ENCODE measurements at regions of chr17 and their contacts with region 1.

Region 1: GRCh38 chr17:20149251-20149650 is 140.1 kb downstream of the SPECC1 start:
- DNase-seq: no peak
- H3K4me3 ChIP-seq: no peak overlapping the region
- H3K27ac ChIP-seq: no peak overlapping the region
- H3K4me1 ChIP-seq: peaks cover 0 to 15% (median 2%) of the 10 kb centered on the region in 4 donors
- H3K27me3 ChIP-seq: no peaks in the 10 kb centered on the region
- CTCF ChIP-seq: no peak
- EP300 ChIP-seq: no peak
- POLR2A ChIP-seq: no peak

Region 2: DNA sequence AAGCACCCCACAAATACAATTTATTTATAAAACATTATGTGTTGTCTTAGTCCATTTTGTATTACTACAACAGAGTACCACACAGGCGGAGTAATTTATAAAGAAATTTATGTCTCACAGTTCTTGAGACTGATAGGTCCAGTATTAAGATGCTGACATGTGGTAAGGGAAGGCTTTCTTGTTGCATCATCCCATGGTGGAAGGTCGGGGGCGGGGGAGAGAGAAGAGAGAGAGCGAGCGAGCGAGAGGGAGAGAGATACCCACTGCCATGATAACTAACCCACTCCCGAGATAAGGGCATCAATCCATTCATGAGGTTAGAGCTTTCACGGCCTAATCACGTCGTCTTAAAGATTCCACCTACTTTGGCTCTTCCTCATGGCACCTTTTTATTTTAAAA is 1344.7 kb after region 1 on chr17:
- in situ Hi-C with region 1: no loop called
- intact Hi-C with region 1: loop called (anchors 5 kb)
- DNase-seq: no peak
- H3K4me3 ChIP-seq: no peak overlapping the region
- H3K27ac ChIP-seq: no peak overlapping the region
- H3K4me1 ChIP-seq: no peaks in the 10 kb centered on the region
- H3K27me3 ChIP-seq: no peaks in the 10 kb centered on the region
- CTCF ChIP-seq: no peak
- EP300 ChIP-seq: no peak
- POLR2A ChIP-seq: no peak

Measured in transverse colon (tissue), 4 donors.